CD4-positive, alpha-beta memory T cell (primary cell): ENCODE measurements at regions of chr17 and their contacts with region 1.

Region 1: DNA sequence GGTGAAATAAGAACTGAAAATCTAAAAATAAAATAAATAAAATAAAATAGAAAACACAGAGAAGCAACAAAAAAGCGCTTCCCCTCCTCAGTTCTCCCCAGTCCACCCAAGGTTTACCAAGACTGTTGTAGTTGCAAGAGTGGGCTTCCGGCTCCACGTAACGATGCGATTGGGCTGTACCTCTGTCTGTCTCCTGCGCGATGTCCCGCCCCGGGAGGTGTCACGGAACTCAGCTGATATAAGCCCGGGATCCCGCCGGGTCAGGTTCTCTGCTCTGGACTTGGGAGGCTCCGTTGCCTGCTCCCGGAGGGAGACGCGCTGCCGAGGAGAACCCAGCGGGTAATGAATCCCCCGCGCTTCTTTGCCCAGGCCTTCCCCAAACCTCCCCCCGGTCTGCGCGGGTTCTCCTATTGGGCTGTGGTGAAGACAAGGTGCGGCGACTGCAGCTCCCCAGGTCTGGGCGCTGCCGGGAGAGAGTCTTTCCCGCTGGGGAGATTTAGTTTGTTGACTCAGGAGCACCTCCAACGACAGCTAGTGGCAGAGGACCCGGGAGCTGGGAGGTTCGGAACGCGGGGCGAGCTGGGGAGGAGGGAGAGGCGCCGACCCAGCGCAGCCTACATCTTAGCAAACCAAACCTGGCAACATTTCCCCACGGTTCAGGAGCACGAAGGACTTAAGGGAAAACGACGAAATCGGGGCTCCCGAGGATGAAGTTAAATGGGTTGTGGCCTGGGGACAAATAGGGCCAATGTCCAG is at the start of gene SLFN5:
- DNase-seq: peak; percentile 92 to 95 (median 94)
- H3K4me3 ChIP-seq: peak within 1 kb of the TSS; percentile 87 to 99
- H3K4me3 Mint-ChIP-seq: peak within 1 kb of the TSS; percentile 98 to 100 (median 99)
- H3K27ac ChIP-seq: peak within 1 kb of the TSS; percentile 93
- H3K27ac Mint-ChIP-seq: peak within 1 kb of the TSS; percentile 97 to 100 (median 99)
- H3K4me1 ChIP-seq: peaks cover 53% of the 10 kb centered on the region
- H3K4me1 Mint-ChIP-seq: peaks cover 40 to 87% (median 55%) of the 10 kb centered on the region in 4 donors
- H3K27me3 ChIP-seq: no peaks in the 10 kb centered on the region
- H3K27me3 Mint-ChIP-seq: no peaks in the 10 kb centered on the region
- total RNA-seq, gene SLFN5: 182 to 188 TPM

Region 2: DNA sequence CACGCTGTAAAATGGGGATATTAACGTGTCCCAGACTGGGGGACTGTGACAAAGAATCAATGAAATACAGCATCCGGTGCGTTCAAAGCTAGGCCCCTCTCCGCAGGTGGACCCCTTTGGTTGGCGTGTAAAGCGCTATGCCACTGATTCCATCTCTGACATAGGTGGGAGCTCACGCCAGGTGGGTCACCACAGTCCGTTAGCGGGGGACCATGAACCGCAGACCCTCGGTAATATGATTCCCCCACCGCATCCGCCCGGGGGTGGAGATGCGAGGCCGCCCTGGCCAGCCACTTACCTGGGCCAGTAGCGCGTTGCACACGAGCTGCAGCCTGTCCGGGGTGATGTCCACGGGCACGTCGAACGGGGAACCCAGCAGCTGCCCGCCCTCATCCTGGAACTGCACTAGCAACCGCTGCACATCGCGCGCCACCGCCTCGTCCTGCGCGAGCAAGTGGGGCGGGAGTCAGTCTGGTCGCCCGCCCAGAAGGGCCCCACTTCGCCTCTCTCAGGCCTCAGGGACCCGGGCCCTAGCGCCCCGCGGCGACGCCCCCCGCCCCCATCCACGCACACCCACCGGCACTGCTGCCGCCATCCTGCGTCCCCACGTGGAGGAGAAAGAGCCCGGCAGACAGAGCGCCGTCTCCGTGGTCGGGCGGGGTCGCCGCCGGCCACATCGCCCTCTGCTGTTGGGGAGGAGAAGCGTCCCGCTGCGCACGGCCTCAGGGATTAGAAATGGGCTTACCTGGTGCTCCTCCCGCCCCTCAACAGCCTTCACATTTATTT is 101.1 kb before region 1 on chr17 and contains the start of gene NLE1:
- CTCF ChIA-PET with region 1: interaction called, 4 read pairs
- POLR2A ChIA-PET with region 1: interaction called, 5 read pairs
- intact Hi-C with region 1: loop called (anchors 1 kb)
- DNase-seq: peak; percentile 85 to 89 (median 87)
- H3K4me3 ChIP-seq: peak within 1 kb of the TSS; percentile 80 to 99
- H3K4me3 Mint-ChIP-seq: peak within 1 kb of the TSS; percentile 82 to 91 (median 88)
- H3K27ac ChIP-seq: peak within 1 kb of the TSS; percentile 77
- H3K27ac Mint-ChIP-seq: peak within 1 kb of the TSS; percentile 72 to 91 (median 78)
- H3K4me1 ChIP-seq: peaks cover 14% of the 10 kb centered on the region
- H3K4me1 Mint-ChIP-seq: peaks cover 8 to 32% (median 20%) of the 10 kb centered on the region in 4 donors
- H3K27me3 ChIP-seq: no peaks in the 10 kb centered on the region
- H3K27me3 Mint-ChIP-seq: no peaks in the 10 kb centered on the region
- total RNA-seq, gene NLE1: 20.1 to 20.5 TPM

Region 3: GRCh38 chr17:35189291-35189690 is 53.7 kb before region 1 on chr17:
- CTCF ChIA-PET with region 1: no interaction called
- POLR2A ChIA-PET with region 1: interaction called, 217 read pairs
- intact Hi-C with region 1: no loop called
- DNase-seq: no peak
- H3K4me3 ChIP-seq: no peak overlapping the region
- H3K4me3 Mint-ChIP-seq: peak overlapping the region in 3 of 8 donors; percentile 22 to 62 (median 52)
- H3K27ac ChIP-seq: no peak overlapping the region
- H3K27ac Mint-ChIP-seq: peak overlapping the region in 4 of 7 donors; percentile 17 to 62 (median 44)
- H3K4me1 ChIP-seq: peaks cover 38% of the 10 kb centered on the region
- H3K4me1 Mint-ChIP-seq: peaks cover 39 to 76% (median 43%) of the 10 kb centered on the region in 4 donors
- H3K27me3 ChIP-seq: no peaks in the 10 kb centered on the region
- H3K27me3 Mint-ChIP-seq: no peaks in the 10 kb centered on the region

Region 4: GRCh38 chr17:35254107-35254802 is 11.3 kb after region 1 on chr17:
- CTCF ChIA-PET with region 1: interaction called, 8 read pairs
- POLR2A ChIA-PET with region 1: interaction called, 30 read pairs
- intact Hi-C with region 1: no loop called
- DNase-seq: no peak
- H3K4me3 ChIP-seq: no peak overlapping the region
- H3K4me3 Mint-ChIP-seq: peak overlapping the region in 6 of 8 donors; percentile 9 to 67 (median 34)
- H3K27ac ChIP-seq: no peak overlapping the region
- H3K27ac Mint-ChIP-seq: peak overlapping the region; percentile 43 to 91 (median 87)
- H3K4me1 ChIP-seq: peaks cover 93% of the 10 kb centered on the region
- H3K4me1 Mint-ChIP-seq: peaks cover 60 to 93% (median 76%) of the 10 kb centered on the region in 4 donors
- H3K27me3 ChIP-seq: no peaks in the 10 kb centered on the region
- H3K27me3 Mint-ChIP-seq: no peaks in the 10 kb centered on the region

Region 5: DNA sequence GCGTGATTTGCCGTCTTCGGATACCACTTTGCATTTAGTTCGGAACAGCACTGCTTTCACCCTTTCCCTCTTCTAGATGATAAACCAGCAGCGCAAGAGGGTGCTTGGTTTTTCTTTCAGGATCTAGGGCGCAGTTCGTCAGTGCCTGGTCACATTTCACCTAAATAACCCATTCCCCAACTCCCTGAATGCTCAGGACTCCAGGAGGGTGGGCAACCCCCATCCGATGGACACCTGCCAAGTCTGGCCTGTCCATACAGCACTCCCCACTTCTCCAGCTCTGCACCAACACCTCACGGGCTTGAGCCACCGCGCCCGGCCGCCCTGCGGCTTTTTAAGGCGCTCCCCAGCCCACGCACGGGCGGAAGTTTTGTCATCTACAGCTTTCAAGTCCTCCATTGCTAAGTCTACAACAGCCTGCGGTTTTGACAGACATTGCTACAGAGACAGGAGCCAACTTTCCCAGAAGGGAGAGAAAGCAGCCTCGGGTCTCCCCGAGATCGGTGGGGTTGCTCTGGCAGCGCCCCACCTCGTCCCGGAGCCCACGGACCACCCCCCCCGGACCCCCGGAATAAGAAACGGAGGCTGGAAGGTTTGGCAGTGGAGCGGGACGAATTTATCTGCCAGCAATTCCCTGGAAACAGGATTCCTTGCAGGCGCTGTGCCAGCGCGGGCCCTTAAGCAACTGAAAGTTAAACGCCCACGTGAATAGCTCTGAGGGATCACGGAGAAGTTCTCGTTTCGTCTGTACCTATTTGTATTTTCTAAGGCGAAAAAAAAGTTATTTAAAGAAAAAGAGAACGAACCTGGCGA is 244.1 kb after region 1 on chr17:
- CTCF ChIA-PET with region 1: interaction called, 10 read pairs
- POLR2A ChIA-PET with region 1: interaction called, 37 read pairs
- intact Hi-C with region 1: loop called (anchors 2 kb)
- DNase-seq: peak; percentile 65 to 86 (median 71)
- H3K4me3 ChIP-seq: peak overlapping the region; percentile 57 to 75
- H3K4me3 Mint-ChIP-seq: peak overlapping the region; percentile 94 to 98 (median 96)
- H3K27ac ChIP-seq: peak overlapping the region; percentile 69
- H3K27ac Mint-ChIP-seq: peak overlapping the region; percentile 94 to 99 (median 97)
- H3K4me1 ChIP-seq: peaks cover 42% of the 10 kb centered on the region
- H3K4me1 Mint-ChIP-seq: peaks cover 34 to 89% (median 63%) of the 10 kb centered on the region in 4 donors
- H3K27me3 ChIP-seq: no peaks in the 10 kb centered on the region
- H3K27me3 Mint-ChIP-seq: no peaks in the 10 kb centered on the region

Region 6: DNA sequence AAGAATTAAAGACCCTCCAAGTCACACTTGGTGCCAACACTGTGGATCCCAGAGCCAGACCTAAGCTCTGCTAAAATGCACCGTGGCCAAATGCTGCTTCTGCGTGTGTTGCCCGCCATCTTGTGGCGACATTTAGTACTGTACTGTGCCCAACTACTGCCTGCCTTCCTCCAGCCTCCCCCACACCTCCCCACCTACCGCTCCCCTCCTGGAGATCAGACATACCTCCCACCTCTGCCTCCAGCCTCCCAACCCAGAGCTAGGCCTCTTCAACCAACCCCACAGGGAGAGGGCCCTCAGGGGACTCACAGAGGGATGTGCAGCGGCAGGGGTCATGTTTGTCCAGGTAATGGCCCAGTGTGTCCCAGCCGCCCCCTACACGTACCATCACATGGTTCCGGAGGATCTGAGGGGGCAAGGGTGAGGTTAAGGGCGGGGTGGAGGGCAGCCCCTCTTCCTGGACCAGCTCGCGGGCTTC is 504.6 kb after region 1 on chr17:
- CTCF ChIA-PET with region 1: interaction called, 4 read pairs
- POLR2A ChIA-PET with region 1: no interaction called
- intact Hi-C with region 1: loop called (anchors 1 kb)
- DNase-seq: peak; percentile 72 to 76 (median 75)
- H3K4me3 ChIP-seq: no peak overlapping the region
- H3K4me3 Mint-ChIP-seq: no peak overlapping the region
- H3K27ac ChIP-seq: no peak overlapping the region
- H3K27ac Mint-ChIP-seq: no peak overlapping the region
- H3K4me1 ChIP-seq: no peaks in the 10 kb centered on the region
- H3K4me1 Mint-ChIP-seq: peaks cover 0 to 9% (median 2%) of the 10 kb centered on the region in 4 donors
- H3K27me3 ChIP-seq: peaks cover 27% of the 10 kb centered on the region
- H3K27me3 Mint-ChIP-seq: peaks cover 24 to 38% of the 10 kb centered on the region in 2 donors